ENCODE measurements at regions of chr3 and their contacts with region 1.

Region 1: GRCh38 chr3:141360888-141361598 is 7.3 kb upstream of the ZBTB38 start:
- DNase-seq: peak in 4 of 5 donors; percentile 46 to 60 (median 50)
- H3K4me3 ChIP-seq: no peak overlapping the region
- H3K4me3 Mint-ChIP-seq: peak overlapping the region in 6 of 8 donors; percentile 11 to 69 (median 50)
- H3K27ac ChIP-seq: no peak overlapping the region
- H3K27ac Mint-ChIP-seq: peak overlapping the region in 2 of 7 donors; percentile 7 to 39
- H3K4me1 ChIP-seq: peaks cover 10% of the 10 kb centered on the region
- H3K4me1 Mint-ChIP-seq: peaks cover 3 to 8% (median 7%) of the 10 kb centered on the region in 4 donors
- H3K27me3 ChIP-seq: no peaks in the 10 kb centered on the region
- H3K27me3 Mint-ChIP-seq: peaks cover 2 to 5% of the 10 kb centered on the region in 2 donors

Region 2: GRCh38 chr3:141321109-141321497 is 39.9 kb before region 1 on chr3:
- CTCF ChIA-PET with region 1: interaction called, 10 read pairs
- POLR2A ChIA-PET with region 1: no interaction called
- intact Hi-C with region 1: no loop called
- DNase-seq: no peak
- H3K4me3 ChIP-seq: no peak overlapping the region
- H3K4me3 Mint-ChIP-seq: peak overlapping the region in 6 of 8 donors; percentile 0 to 77 (median 62)
- H3K27ac ChIP-seq: no peak overlapping the region
- H3K27ac Mint-ChIP-seq: peak overlapping the region; percentile 48 to 93 (median 86)
- H3K4me1 ChIP-seq: peaks cover 19% of the 10 kb centered on the region
- H3K4me1 Mint-ChIP-seq: peaks cover 15 to 28% (median 23%) of the 10 kb centered on the region in 4 donors
- H3K27me3 ChIP-seq: no peaks in the 10 kb centered on the region
- H3K27me3 Mint-ChIP-seq: no peaks in the 10 kb centered on the region

Region 3: DNA sequence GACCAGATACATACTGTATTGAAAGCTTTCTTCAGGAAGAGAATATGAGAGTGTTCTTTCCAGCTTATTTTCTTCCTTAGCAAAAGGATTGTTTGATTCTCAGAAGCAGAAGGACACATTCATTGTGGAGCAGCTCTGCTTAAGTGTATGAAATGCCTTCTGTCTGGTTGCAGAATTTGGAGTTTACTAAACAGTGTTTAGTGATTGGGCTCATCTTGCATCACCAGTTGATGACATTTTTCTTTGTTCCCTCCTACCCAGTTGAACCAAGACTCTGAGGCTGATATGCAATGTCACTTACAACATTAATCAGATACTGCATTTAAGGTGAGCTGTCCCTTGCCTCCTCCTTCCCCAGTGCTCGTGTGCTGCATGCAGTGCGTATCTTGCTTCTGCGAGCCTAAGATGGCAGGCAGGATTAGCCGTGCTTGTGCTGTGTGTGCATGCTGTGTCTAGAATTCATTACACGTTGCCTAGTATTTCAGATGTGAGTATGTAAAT is 25.6 kb after region 1 on chr3:
- CTCF ChIA-PET with region 1: interaction called, 14 read pairs
- POLR2A ChIA-PET with region 1: interaction called, 4 read pairs
- intact Hi-C with region 1: no loop called
- DNase-seq: no peak
- H3K4me3 ChIP-seq: peak overlapping the region in 1 of 2 donors; percentile 17
- H3K4me3 Mint-ChIP-seq: peak overlapping the region; percentile 85 to 91 (median 88)
- H3K27ac ChIP-seq: peak overlapping the region; percentile 33
- H3K27ac Mint-ChIP-seq: peak overlapping the region; percentile 45 to 89 (median 86)
- H3K4me1 ChIP-seq: peaks cover 15% of the 10 kb centered on the region
- H3K4me1 Mint-ChIP-seq: peaks cover 17 to 23% (median 20%) of the 10 kb centered on the region in 4 donors
- H3K27me3 ChIP-seq: no peaks in the 10 kb centered on the region
- H3K27me3 Mint-ChIP-seq: no peaks in the 10 kb centered on the region

Region 4: GRCh38 chr3:141426404-141427034 is 65.5 kb after region 1 on chr3:
- CTCF ChIA-PET with region 1: interaction called, 21 read pairs
- POLR2A ChIA-PET with region 1: no interaction called
- intact Hi-C with region 1: no loop called
- DNase-seq: no peak
- H3K4me3 ChIP-seq: no peak overlapping the region
- H3K4me3 Mint-ChIP-seq: no peak overlapping the region
- H3K27ac ChIP-seq: no peak overlapping the region
- H3K27ac Mint-ChIP-seq: peak overlapping the region in 6 of 7 donors; percentile 16 to 74 (median 50)
- H3K4me1 ChIP-seq: peaks cover 27% of the 10 kb centered on the region
- H3K4me1 Mint-ChIP-seq: peaks cover 8 to 48% (median 35%) of the 10 kb centered on the region in 4 donors
- H3K27me3 ChIP-seq: no peaks in the 10 kb centered on the region
- H3K27me3 Mint-ChIP-seq: no peaks in the 10 kb centered on the region

Region 5: GRCh38 chr3:141452036-141452435 is 91.0 kb after region 1 on chr3:
- CTCF ChIA-PET with region 1: interaction called, 147 read pairs
- POLR2A ChIA-PET with region 1: interaction called, 14 read pairs
- intact Hi-C with region 1: loop called (anchors 1 kb)
- DNase-seq: peak; percentile 57 to 64 (median 62)
- H3K4me3 ChIP-seq: no peak overlapping the region
- H3K4me3 Mint-ChIP-seq: no peak overlapping the region
- H3K27ac ChIP-seq: no peak overlapping the region
- H3K27ac Mint-ChIP-seq: no peak overlapping the region
- H3K4me1 ChIP-seq: peaks cover 18% of the 10 kb centered on the region
- H3K4me1 Mint-ChIP-seq: peaks cover 7 to 14% (median 10%) of the 10 kb centered on the region in 4 donors
- H3K27me3 ChIP-seq: no peaks in the 10 kb centered on the region
- H3K27me3 Mint-ChIP-seq: no peaks in the 10 kb centered on the region